Dorsolateral prefrontal cortex (tissue), 120 donors: ENCODE measurements at regions of chr1 and their contacts with region 1.

Region 1: GRCh38 chr1:63148825-63149645 is 173.3 kb upstream of the FOXD3 start:
- DNase-seq: peak in 6 of 10 donors; percentile 21 to 77 (median 52)
- H3K4me3 ChIP-seq: no peak overlapping the region
- H3K27ac ChIP-seq: no peak overlapping the region
- H3K27me3 ChIP-seq: peaks cover 0 to 18% (median 0%) of the 10 kb centered on the region in 45 donors
- CTCF ChIP-seq: peak; percentile 22 to 84 (median 66)

Region 2: GRCh38 chr1:62841587-62842169 is 307.4 kb before region 1 on chr1:
- intact Hi-C with region 1: loop called in 1 of 2 experiments (anchors 5 kb)
- DNase-seq: peak in 1 of 10 donors; percentile 27
- H3K4me3 ChIP-seq: no peak overlapping the region
- H3K27ac ChIP-seq: peak overlapping the region in 17 of 59 donors; percentile 3 to 51 (median 28)
- H3K27me3 ChIP-seq: no peaks in the 10 kb centered on the region
- CTCF ChIP-seq: peak; percentile 67 to 96 (median 86)

Region 3: DNA sequence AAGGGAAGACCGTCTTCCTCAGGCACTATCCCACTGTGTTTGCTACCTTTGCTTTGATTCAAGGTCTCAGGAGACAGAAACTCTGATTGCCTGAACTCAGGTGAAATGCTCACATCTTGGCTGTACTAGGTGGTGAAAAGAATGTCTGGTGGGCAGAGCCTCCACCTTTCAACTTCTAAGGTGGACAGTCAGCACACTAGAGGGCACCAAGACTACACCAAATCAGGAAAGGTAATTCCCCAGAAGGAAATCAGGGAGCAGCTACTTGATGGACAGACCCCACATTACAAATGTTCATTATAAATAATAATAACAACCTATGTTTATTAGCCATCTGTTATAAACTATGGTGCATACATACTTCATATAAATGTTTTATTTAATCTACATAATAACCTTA is 144.2 kb before region 1 on chr1:
- intact Hi-C with region 1: loop called (anchors 2 to 10 kb)
- DNase-seq: no peak
- H3K4me3 ChIP-seq: no peak overlapping the region
- H3K27ac ChIP-seq: no peak overlapping the region
- H3K27me3 ChIP-seq: peaks cover 0 to 9% (median 0%) of the 10 kb centered on the region in 45 donors
- CTCF ChIP-seq: peak in 54 of 56 donors; percentile 11 to 70 (median 43)

Region 4: GRCh38 chr1:63112155-63112900 is 36.7 kb before region 1 on chr1:
- intact Hi-C with region 1: no loop called
- DNase-seq: no peak
- H3K4me3 ChIP-seq: no peak overlapping the region
- H3K27ac ChIP-seq: peak overlapping the region in 1 of 59 donors; percentile 11
- H3K27me3 ChIP-seq: peaks cover 0 to 3% (median 0%) of the 10 kb centered on the region in 45 donors
- CTCF ChIP-seq: no peak